ENCODE measurements at regions of chr7 and their contacts with region 1.

Region 1: GRCh38 chr7:97480772-97481390 is 251.0 kb upstream of the TAC1 start:
- DNase-seq: no peak
- ATAC-seq: no peak
- H3K4me3 ChIP-seq: no peak overlapping the region
- H3K27ac ChIP-seq: no peak overlapping the region
- H3K4me1 ChIP-seq: no peaks in the 10 kb centered on the region
- H3K27me3 ChIP-seq: no peaks in the 10 kb centered on the region
- CTCF ChIP-seq: no peak
- POLR2A ChIP-seq: no peak

Region 2: GRCh38 chr7:95730493-95731280 is 1750.2 kb before region 1 on chr7:
- intact Hi-C with region 1: loop called (anchors 10 kb)
- DNase-seq: peak; percentile 23 to 52 (median 33)
- ATAC-seq: no peak
- H3K4me3 ChIP-seq: no peak overlapping the region
- H3K27ac ChIP-seq: no peak overlapping the region
- H3K4me1 ChIP-seq: no peaks in the 10 kb centered on the region
- H3K27me3 ChIP-seq: no peaks in the 10 kb centered on the region
- CTCF ChIP-seq: no peak
- POLR2A ChIP-seq: no peak

Region 3: DNA sequence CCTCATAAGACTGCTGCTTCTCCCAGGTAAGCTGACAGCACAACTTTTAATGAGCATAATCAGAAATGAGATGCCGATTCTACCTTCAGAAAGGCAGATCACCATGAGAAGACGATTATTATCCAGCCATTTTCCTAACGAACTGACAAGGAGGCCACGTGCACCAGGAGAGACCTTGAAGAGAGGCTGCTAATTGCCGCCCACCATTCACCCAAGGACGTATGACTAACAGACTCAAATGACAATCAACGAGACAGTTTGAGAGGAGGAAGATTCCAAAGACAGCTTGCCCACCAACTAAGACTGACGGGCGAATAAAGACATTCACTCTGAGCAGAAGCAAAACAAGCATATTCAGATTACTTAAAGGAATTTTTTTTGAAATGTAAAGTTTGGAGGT is 50.9 kb before region 1 on chr7:
- intact Hi-C with region 1: no loop called
- DNase-seq: no peak
- ATAC-seq: no peak
- H3K4me3 ChIP-seq: no peak overlapping the region
- H3K27ac ChIP-seq: no peak overlapping the region
- H3K4me1 ChIP-seq: no peaks in the 10 kb centered on the region
- H3K27me3 ChIP-seq: no peaks in the 10 kb centered on the region
- CTCF ChIP-seq: no peak
- POLR2A ChIP-seq: no peak